Uterus (tissue), 4 donors: ENCODE measurements at regions of chr1 and their contacts with region 1.

Region 1: DNA sequence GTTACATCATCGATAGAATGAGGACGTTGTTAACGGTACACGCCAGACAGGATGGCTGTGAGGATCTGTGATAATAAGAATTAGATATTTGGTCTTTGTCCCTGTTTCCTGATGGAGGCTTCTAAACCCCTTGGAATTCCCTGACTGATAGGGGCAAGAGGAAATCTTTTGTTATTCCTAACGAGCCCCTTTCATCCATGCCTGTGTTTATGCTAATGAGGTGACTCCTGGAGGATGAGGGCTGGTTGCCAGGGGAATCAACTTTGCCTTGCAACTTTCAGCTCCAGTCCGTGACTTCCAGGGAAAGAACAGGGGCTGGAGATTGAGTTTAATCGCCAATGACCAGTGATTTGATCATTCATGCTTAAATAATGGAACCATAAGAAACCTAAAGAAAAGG is 39.3 kb upstream of the NLRP3 start:
- DNase-seq: no peak
- H3K4me3 ChIP-seq: no peak overlapping the region
- H3K27ac ChIP-seq: no peak overlapping the region
- H3K4me1 ChIP-seq: no peaks in the 10 kb centered on the region
- H3K27me3 ChIP-seq: no peaks in the 10 kb centered on the region
- CTCF ChIP-seq: no peak
- POLR2A ChIP-seq: no peak

Region 2: GRCh38 chr1:247043406-247043805 is 333.3 kb before region 1 on chr1:
- intact Hi-C with region 1: loop called (anchors 5 kb)
- DNase-seq: no peak
- H3K4me3 ChIP-seq: no peak overlapping the region
- H3K27ac ChIP-seq: no peak overlapping the region
- H3K4me1 ChIP-seq: no peaks in the 10 kb centered on the region
- H3K27me3 ChIP-seq: no peaks in the 10 kb centered on the region
- CTCF ChIP-seq: peak in 3 of 4 experiments; percentile 17 to 39 (median 30)
- POLR2A ChIP-seq: no peak